ENCODE measurements at regions of chr14 and their contacts with region 1.

Region 1: GRCh38 chr14:104563742-104564615 is 15.6 kb upstream of the C14orf180 start:
- DNase-seq: peak; percentile 71
- H3K4me3 ChIP-seq: no peak overlapping the region
- H3K27ac ChIP-seq: no peak overlapping the region
- H3K4me1 ChIP-seq: peaks cover 0 to 6% (median 0%) of the 10 kb centered on the region in 4 donors
- H3K27me3 ChIP-seq: peaks cover 61% of the 10 kb centered on the region
- CTCF ChIP-seq: peak; percentile 65 to 89 (median 81)
- EP300 ChIP-seq: no peak
- POLR2A ChIP-seq: no peak

Region 2: GRCh38 chr14:104143521-104144452 is 420.2 kb before region 1 on chr14:
- in situ Hi-C with region 1: loop called (anchors 25 kb)
- intact Hi-C with region 1: loop called (anchors 2 kb)
- DNase-seq: no peak
- H3K4me3 ChIP-seq: no peak overlapping the region
- H3K27ac ChIP-seq: no peak overlapping the region
- H3K4me1 ChIP-seq: peaks cover 0 to 16% (median 13%) of the 10 kb centered on the region in 4 donors
- H3K27me3 ChIP-seq: peaks cover 13% of the 10 kb centered on the region
- CTCF ChIP-seq: no peak
- EP300 ChIP-seq: no peak
- POLR2A ChIP-seq: no peak

Region 3: GRCh38 chr14:104206281-104206904 is 357.6 kb before region 1 on chr14:
- in situ Hi-C with region 1: no loop called
- intact Hi-C with region 1: no loop called
- DNase-seq: peak; percentile 67
- H3K4me3 ChIP-seq: no peak overlapping the region
- H3K27ac ChIP-seq: no peak overlapping the region
- H3K4me1 ChIP-seq: peaks cover 0 to 4% (median 0%) of the 10 kb centered on the region in 4 donors
- H3K27me3 ChIP-seq: no peaks in the 10 kb centered on the region
- CTCF ChIP-seq: no peak
- EP300 ChIP-seq: no peak
- POLR2A ChIP-seq: no peak

Region 4: GRCh38 chr14:104805941-104806624 is 242.1 kb after region 1 on chr14:
- in situ Hi-C with region 1: no loop called
- intact Hi-C with region 1: no loop called
- DNase-seq: no peak
- H3K4me3 ChIP-seq: no peak overlapping the region
- H3K27ac ChIP-seq: no peak overlapping the region
- H3K4me1 ChIP-seq: peaks cover 9 to 16% (median 11%) of the 10 kb centered on the region in 4 donors
- H3K27me3 ChIP-seq: no peaks in the 10 kb centered on the region
- CTCF ChIP-seq: no peak
- EP300 ChIP-seq: no peak
- POLR2A ChIP-seq: no peak